ENCODE measurements at regions of chr3 and their contacts with region 1.

Region 1: DNA sequence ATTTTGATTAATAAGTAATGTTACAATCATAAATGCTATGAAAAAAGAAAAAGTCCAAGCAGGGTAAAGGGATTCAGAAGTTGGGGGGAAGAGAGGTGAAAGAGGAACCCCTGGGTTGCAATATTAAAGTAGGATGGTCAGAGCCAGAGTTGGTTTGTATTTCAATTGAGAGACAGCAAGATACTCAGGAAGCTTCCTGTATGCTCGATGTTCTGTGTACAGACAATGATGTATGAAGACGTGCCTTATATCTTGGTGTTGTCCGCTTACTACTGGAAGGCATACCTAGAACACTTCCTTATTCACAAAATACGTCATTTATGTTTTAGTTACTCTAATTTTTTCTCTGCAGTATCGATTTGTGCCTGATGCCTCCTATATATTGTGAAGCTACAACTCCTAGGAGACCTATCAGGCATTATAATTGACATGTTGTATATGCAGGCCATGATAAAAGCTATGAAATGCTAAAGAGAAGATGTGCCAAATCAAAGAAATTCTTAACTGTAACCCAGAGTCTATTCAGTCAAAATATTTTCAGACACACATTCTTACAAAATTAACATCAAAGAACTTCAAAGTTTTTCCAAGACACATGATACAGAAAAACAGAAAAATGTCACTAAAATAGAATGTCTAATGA is 87.5 kb downstream of the TBL1XR1 start:
- DNase-seq: peak in 3 of 14 experiments; percentile 53 to 62 (median 60)
- ATAC-seq: peak; percentile 94
- H3K4me3 ChIP-seq: no peak overlapping the region
- H3K4me3 Mint-ChIP-seq: peak overlapping the region; percentile 69
- H3K27ac ChIP-seq: peak overlapping the region in 1 of 2 donors; percentile 33
- H3K27ac Mint-ChIP-seq: peak overlapping the region; percentile 88
- H3K4me1 ChIP-seq: peaks cover 24% of the 10 kb centered on the region
- H3K4me1 Mint-ChIP-seq: peaks cover 76% of the 10 kb centered on the region
- H3K27me3 ChIP-seq: no peaks in the 10 kb centered on the region
- H3K27me3 Mint-ChIP-seq: no peaks in the 10 kb centered on the region
- CTCF ChIP-seq: no peak

Region 2: DNA sequence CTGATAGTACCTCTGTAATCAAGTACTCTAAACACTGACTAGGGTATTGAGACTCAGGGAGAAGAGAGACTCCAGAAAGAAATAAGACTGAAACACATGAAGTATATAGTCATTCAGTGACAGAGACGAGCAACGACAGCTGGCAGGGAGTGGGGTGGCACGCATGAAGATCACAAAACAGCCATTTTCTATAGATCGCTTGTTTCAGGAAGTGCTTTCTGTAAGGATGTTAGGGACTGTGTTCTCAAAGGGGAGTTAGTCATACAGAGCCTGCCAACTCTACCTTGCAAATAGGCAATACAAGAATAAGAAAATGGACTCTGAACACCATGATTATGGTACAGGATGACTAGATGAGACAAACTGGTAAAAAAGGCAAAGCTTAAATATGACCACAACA is 52.0 kb before region 1 on chr3:
- CTCF ChIA-PET with region 1: no interaction called
- POLR2A ChIA-PET with region 1: interaction called, 3 read pairs
- intact Hi-C with region 1: loop called in 1 of 2 experiments (anchors 5 kb)
- DNase-seq: peak in 12 of 14 experiments; percentile 3 to 67 (median 22)
- ATAC-seq: peak; percentile 97
- H3K4me3 ChIP-seq: no peak overlapping the region
- H3K4me3 Mint-ChIP-seq: no peak overlapping the region
- H3K27ac ChIP-seq: no peak overlapping the region
- H3K27ac Mint-ChIP-seq: no peak overlapping the region
- H3K4me1 ChIP-seq: peaks cover 5% of the 10 kb centered on the region
- H3K4me1 Mint-ChIP-seq: peaks cover 36% of the 10 kb centered on the region
- H3K27me3 ChIP-seq: no peaks in the 10 kb centered on the region
- H3K27me3 Mint-ChIP-seq: no peaks in the 10 kb centered on the region
- CTCF ChIP-seq: no peak

Region 3: GRCh38 chr3:177069514-177070329 is 40.1 kb before region 1 on chr3:
- CTCF ChIA-PET with region 1: no interaction called
- POLR2A ChIA-PET with region 1: no interaction called
- intact Hi-C with region 1: loop called in 1 of 2 experiments (anchors 5 kb)
- DNase-seq: no peak
- ATAC-seq: no peak
- H3K4me3 ChIP-seq: no peak overlapping the region
- H3K4me3 Mint-ChIP-seq: no peak overlapping the region
- H3K27ac ChIP-seq: no peak overlapping the region
- H3K27ac Mint-ChIP-seq: peak overlapping the region; percentile 22
- H3K4me1 ChIP-seq: no peaks in the 10 kb centered on the region
- H3K4me1 Mint-ChIP-seq: peaks cover 76% of the 10 kb centered on the region
- H3K27me3 ChIP-seq: no peaks in the 10 kb centered on the region
- H3K27me3 Mint-ChIP-seq: no peaks in the 10 kb centered on the region
- CTCF ChIP-seq: no peak

Region 4: GRCh38 chr3:177144923-177145780 is 35.3 kb after region 1 on chr3:
- CTCF ChIA-PET with region 1: no interaction called
- POLR2A ChIA-PET with region 1: interaction called, 3 read pairs
- intact Hi-C with region 1: loop called in 1 of 2 experiments (anchors 2 kb)
- DNase-seq: peak in 3 of 14 experiments; percentile 70 to 81 (median 79)
- ATAC-seq: peak; percentile 81
- H3K4me3 ChIP-seq: peak overlapping the region; percentile 8
- H3K4me3 Mint-ChIP-seq: peak overlapping the region; percentile 65
- H3K27ac ChIP-seq: peak overlapping the region; percentile 39 to 53
- H3K27ac Mint-ChIP-seq: peak overlapping the region; percentile 90
- H3K4me1 ChIP-seq: peaks cover 46% of the 10 kb centered on the region
- H3K4me1 Mint-ChIP-seq: peaks cover 83% of the 10 kb centered on the region
- H3K27me3 ChIP-seq: no peaks in the 10 kb centered on the region
- H3K27me3 Mint-ChIP-seq: no peaks in the 10 kb centered on the region
- CTCF ChIP-seq: no peak

Region 5: DNA sequence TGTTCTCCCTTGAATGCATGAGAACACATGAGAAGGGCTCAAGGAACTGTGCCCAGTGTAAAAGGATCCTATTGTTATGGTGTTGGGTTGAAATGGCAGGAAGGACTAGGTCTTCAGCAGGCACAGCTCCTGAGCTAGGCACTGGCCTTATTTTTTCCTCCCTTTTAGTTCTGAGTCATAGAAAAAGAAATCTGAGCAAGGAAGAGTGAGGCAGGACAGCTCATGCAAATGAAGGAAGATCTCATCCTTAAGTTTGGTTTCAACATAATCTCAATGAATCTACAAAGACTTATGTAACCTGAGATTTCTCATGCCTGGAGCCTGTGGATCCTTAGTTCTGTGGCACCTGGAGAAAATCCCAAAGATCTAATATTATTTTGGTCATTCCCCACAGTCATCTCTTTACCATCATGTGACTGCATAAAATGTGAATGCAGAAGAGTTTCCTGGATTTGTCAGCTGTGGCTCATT is 276.1 kb after region 1 on chr3:
- CTCF ChIA-PET with region 1: no interaction called
- POLR2A ChIA-PET with region 1: no interaction called
- intact Hi-C with region 1: no loop called
- DNase-seq: no peak
- ATAC-seq: no peak
- H3K4me3 ChIP-seq: no peak overlapping the region
- H3K4me3 Mint-ChIP-seq: no peak overlapping the region
- H3K27ac ChIP-seq: no peak overlapping the region
- H3K27ac Mint-ChIP-seq: no peak overlapping the region
- H3K4me1 ChIP-seq: no peaks in the 10 kb centered on the region
- H3K4me1 Mint-ChIP-seq: no peaks in the 10 kb centered on the region
- H3K27me3 ChIP-seq: no peaks in the 10 kb centered on the region
- H3K27me3 Mint-ChIP-seq: no peaks in the 10 kb centered on the region
- CTCF ChIP-seq: no peak

Measured in CD4-positive, alpha-beta T cell (primary cell).